ENCODE measurements at regions of chr7 and their contacts with region 1.

Region 1: GRCh38 chr7:20607216-20607615 is 8.3 kb upstream of the ABCB5 start:
- DNase-seq: no peak

Region 2: GRCh38 chr7:19051767-19052375 is 1555.3 kb before region 1 on chr7:
- intact Hi-C with region 1: loop called in 1 of 2 experiments (anchors 5 kb)
- DNase-seq: no peak

Region 3: GRCh38 chr7:20424500-20424899 is 182.7 kb before region 1 on chr7:
- intact Hi-C with region 1: no loop called
- DNase-seq: no peak

Region 4: GRCh38 chr7:20542594-20542993 is 64.6 kb before region 1 on chr7:
- intact Hi-C with region 1: no loop called
- DNase-seq: no peak

Measured in posterior vena cava (tissue), 2 donors.